GM12878 (cell line): ENCODE measurements at regions of chr2 and their contacts with region 1.

Region 1: GRCh38 chr2:197261808-197262226 is 48.8 kb downstream of the ANKRD44 start:
- DNase-seq: peak; percentile 91
- ATAC-seq: peak; percentile 67
- H3K4me3 ChIP-seq: peak overlapping the region; percentile 12; the same call in 1 of the 2 replicates
- H3K27ac ChIP-seq: peak overlapping the region; percentile 87
- H3K4me1 ChIP-seq: peaks cover 63% of the 10 kb centered on the region
- H3K27me3 ChIP-seq: no peaks in the 10 kb centered on the region
- CTCF ChIP-seq: no peak
- EP300 ChIP-seq: peak in 1 of 2 experiments; percentile 77; a peak in 3 of 4 replicates
- POLR2A ChIP-seq: peak; percentile 38
- RAD21 ChIP-seq: no peak

Region 2: GRCh38 chr2:197239434-197239833 is 22.4 kb before region 1 on chr2:
- CTCF ChIA-PET with region 1: interaction called, 6 read pairs
- POLR2A ChIA-PET with region 1: interaction called, 47 read pairs
- RAD21 ChIA-PET with region 1: interaction called, 9 read pairs
- SMC1A ChIA-PET with region 1: interaction called, 66 read pairs
- in situ Hi-C with region 1: no loop called
- intact Hi-C with region 1: no loop called
- DNase-seq: no peak
- ATAC-seq: peak; percentile 82
- H3K4me3 ChIP-seq: peak overlapping the region; percentile 56
- H3K27ac ChIP-seq: peak overlapping the region; percentile 77
- H3K4me1 ChIP-seq: peaks cover 49% of the 10 kb centered on the region
- H3K27me3 ChIP-seq: no peaks in the 10 kb centered on the region
- CTCF ChIP-seq: no peak
- EP300 ChIP-seq: no peak
- POLR2A ChIP-seq: no peak
- RAD21 ChIP-seq: no peak

Region 3: DNA sequence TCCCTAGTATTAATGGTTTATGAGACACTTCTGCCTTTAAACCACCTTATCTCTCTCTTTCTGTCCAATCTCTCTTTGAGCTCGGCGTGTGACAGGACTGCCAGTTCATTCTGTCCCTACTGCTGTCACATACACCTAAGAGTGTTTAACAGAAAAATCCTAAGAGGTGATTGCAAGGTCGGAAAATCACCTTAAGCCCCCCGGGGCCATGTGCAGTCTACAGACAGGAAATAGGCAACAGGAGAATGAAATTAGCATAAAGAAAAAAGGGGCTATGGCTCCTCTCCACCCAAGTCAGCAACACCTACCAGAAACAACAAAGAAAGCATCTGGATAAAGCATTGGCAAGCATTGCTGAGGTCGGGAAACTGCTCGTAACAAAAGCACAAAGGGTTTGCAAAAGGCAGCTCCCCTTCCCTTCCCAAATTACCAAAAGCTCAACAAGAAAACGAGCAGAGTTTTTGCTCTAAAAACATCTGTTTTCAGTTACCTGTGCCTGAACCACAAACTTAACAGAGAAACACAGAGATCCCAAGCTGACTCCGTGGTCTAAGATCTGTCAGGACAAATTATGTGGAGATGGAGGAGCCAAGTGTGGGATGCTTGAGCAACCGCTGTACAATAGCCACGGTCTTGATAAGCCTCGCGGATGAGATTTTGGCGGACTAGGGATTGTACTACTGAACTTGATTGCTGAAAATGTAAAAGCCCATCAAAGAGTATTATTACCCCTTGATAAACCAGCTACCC is 18.4 kb after region 1 on chr2:
- CTCF ChIA-PET with region 1: interaction called, 11 read pairs
- POLR2A ChIA-PET with region 1: interaction called, 8 read pairs
- RAD21 ChIA-PET with region 1: interaction called, 7 read pairs
- SMC1A ChIA-PET with region 1: interaction called, 37 read pairs
- in situ Hi-C with region 1: no loop called
- intact Hi-C with region 1: no loop called
- DNase-seq: no peak
- ATAC-seq: peak; percentile 82
- H3K4me3 ChIP-seq: peak overlapping the region; percentile 33; the same call in 1 of the 2 replicates
- H3K27ac ChIP-seq: peak overlapping the region; percentile 36
- H3K4me1 ChIP-seq: peaks cover 11% of the 10 kb centered on the region
- H3K27me3 ChIP-seq: no peaks in the 10 kb centered on the region
- CTCF ChIP-seq: no peak
- EP300 ChIP-seq: 0 out of 4 replicates have a peak, but pooled peaks of 1 of the 2 experiments have one; percentile 12
- POLR2A ChIP-seq: no peak
- RAD21 ChIP-seq: no peak

Region 4: GRCh38 chr2:197286805-197287598 is 25.2 kb after region 1 on chr2:
- CTCF ChIA-PET with region 1: interaction called, 3 read pairs
- POLR2A ChIA-PET with region 1: interaction called, 41 read pairs
- RAD21 ChIA-PET with region 1: interaction called, 60 read pairs
- SMC1A ChIA-PET with region 1: interaction called, 95 read pairs
- in situ Hi-C with region 1: no loop called
- intact Hi-C with region 1: no loop called
- DNase-seq: no peak
- ATAC-seq: peak; percentile 95
- H3K4me3 ChIP-seq: no peak overlapping the region; the same call in 1 of the 2 replicates
- H3K27ac ChIP-seq: peak overlapping the region; percentile 71
- H3K4me1 ChIP-seq: peaks cover 26% of the 10 kb centered on the region
- H3K27me3 ChIP-seq: no peaks in the 10 kb centered on the region
- CTCF ChIP-seq: no peak
- EP300 ChIP-seq: no peak
- POLR2A ChIP-seq: no peak
- RAD21 ChIP-seq: no peak

Region 5: GRCh38 chr2:197425550-197425949 is 163.7 kb after region 1 on chr2:
- CTCF ChIA-PET with region 1: no interaction called
- POLR2A ChIA-PET with region 1: no interaction called
- RAD21 ChIA-PET with region 1: no interaction called
- SMC1A ChIA-PET with region 1: no interaction called
- in situ Hi-C with region 1: no loop called
- intact Hi-C with region 1: no loop called
- DNase-seq: no peak
- ATAC-seq: no peak
- H3K4me3 ChIP-seq: no peak overlapping the region
- H3K27ac ChIP-seq: no peak overlapping the region
- H3K4me1 ChIP-seq: 0 out of 2 replicates have a peak, but pooled peaks cover 3% of the 10 kb centered on the region
- H3K27me3 ChIP-seq: no peaks in the 10 kb centered on the region
- CTCF ChIP-seq: no peak
- EP300 ChIP-seq: no peak
- POLR2A ChIP-seq: no peak
- RAD21 ChIP-seq: no peak